Naive thymus-derived CD4-positive, alpha-beta T cell (primary cell): ENCODE measurements at regions of chrX and their contacts with region 1.

Region 1: DNA sequence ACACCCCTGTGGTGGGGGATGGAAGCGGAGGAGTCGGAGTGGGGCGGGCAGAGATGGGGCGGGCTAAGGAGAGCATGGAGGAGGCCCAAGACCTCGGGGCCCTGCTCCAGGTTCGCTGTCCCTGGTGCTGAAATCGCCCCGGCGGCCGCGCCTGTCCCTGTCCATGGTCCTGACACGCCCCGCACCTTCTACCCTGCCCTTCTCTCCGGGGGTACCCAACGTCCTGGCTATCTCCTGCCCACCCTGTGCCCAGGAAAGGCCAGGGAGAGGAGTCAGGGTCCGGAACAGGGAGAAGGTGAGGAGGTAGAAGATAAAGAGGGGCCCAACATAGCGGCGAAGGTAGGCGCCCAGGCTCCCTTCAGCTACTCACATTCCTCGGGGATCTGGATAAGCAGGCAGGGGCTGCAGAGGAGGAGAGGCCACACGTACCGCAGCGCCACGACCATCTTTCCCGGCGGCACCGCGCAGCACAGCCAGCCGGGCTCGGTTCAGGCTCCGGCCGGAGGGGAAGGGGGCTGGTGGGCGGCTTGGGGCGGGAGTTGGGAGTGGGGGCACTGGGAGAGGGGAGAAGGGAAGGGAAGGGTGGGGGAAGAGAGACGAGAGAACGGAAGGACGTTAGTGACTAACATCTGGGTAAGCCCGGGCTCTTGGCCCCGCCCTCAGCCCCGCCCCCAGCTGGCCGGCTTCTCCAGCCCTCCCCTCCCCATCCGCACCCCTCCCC is 10.4 kb downstream of the L1CAM start:
- DNase-seq: peak; percentile 49 to 82 (median 58)
- ATAC-seq: peak; percentile 96
- H3K4me3 ChIP-seq: no peak overlapping the region
- H3K4me3 Mint-ChIP-seq: peak overlapping the region in 2 of 10 donors; percentile 29 to 45
- H3K27ac ChIP-seq: no peak overlapping the region
- H3K27ac Mint-ChIP-seq: peak overlapping the region in 5 of 9 donors; percentile 39 to 81 (median 66)
- H3K4me1 ChIP-seq: peaks cover 0 to 4% of the 10 kb centered on the region in 2 donors
- H3K4me1 Mint-ChIP-seq: peaks cover 7 to 25% (median 20%) of the 10 kb centered on the region in 7 donors
- H3K27me3 ChIP-seq: no peaks in the 10 kb centered on the region
- H3K27me3 Mint-ChIP-seq: peaks cover 0 to 18% (median 11%) of the 10 kb centered on the region in 5 donors

Region 2: DNA sequence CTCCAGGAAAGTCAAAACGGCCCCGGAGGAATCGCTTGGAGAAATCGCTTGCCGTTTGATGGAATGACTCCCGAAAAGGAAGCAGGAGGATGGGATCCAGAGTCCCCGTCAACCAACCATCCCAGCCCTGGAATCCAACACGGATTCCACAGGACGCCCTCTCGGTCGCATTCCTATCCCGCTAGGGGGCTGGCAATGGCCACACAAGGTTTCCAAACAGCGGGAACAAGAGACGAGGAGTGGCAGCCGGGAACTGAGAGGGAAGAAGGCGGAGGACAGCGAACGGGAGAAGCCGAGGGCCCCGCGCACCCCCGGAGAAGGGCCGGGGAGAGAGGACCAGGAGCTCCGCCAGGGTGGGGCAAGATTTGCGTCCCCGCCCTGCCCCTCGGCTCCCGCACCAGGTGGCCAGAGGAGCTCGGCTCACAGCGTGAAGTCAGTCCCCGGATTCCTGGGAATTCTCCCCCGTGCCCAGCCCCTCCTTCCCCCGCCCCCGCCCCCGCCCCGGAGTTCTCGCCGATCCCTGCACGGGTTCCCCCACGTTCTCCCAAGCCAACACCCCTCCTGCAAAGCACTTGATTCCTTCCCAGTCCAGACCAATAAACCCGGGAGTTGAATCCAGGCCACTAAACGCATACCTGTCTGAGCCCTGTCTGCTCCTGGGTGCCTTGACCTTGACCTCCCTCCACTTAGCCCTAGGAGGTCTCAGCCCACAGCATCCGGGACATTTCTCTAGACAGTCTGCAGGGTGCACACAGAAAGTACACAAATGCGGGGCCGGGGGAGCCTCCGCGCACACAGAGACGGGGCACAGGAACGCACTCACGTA is 46.6 kb before region 1 on chrX:
- CTCF ChIA-PET with region 1: no interaction called
- POLR2A ChIA-PET with region 1: no interaction called
- intact Hi-C with region 1: loop called in 1 of 2 experiments (anchors 5 kb)
- DNase-seq: no peak
- ATAC-seq: peak; percentile 42
- H3K4me3 ChIP-seq: peak overlapping the region; percentile 24
- H3K4me3 Mint-ChIP-seq: peak overlapping the region; percentile 17 to 83 (median 72)
- H3K27ac ChIP-seq: no peak overlapping the region
- H3K27ac Mint-ChIP-seq: peak overlapping the region in 3 of 9 donors; percentile 41 to 58 (median 46)
- H3K4me1 ChIP-seq: peaks cover 0 to 3% of the 10 kb centered on the region in 2 donors
- H3K4me1 Mint-ChIP-seq: peaks cover 10 to 37% (median 20%) of the 10 kb centered on the region in 7 donors
- H3K27me3 ChIP-seq: no peaks in the 10 kb centered on the region
- H3K27me3 Mint-ChIP-seq: peaks cover 0 to 39% (median 0%) of the 10 kb centered on the region in 5 donors